HepG2 (cell line): ENCODE measurements at regions of chr11 and their contacts with region 1.

Region 1: DNA sequence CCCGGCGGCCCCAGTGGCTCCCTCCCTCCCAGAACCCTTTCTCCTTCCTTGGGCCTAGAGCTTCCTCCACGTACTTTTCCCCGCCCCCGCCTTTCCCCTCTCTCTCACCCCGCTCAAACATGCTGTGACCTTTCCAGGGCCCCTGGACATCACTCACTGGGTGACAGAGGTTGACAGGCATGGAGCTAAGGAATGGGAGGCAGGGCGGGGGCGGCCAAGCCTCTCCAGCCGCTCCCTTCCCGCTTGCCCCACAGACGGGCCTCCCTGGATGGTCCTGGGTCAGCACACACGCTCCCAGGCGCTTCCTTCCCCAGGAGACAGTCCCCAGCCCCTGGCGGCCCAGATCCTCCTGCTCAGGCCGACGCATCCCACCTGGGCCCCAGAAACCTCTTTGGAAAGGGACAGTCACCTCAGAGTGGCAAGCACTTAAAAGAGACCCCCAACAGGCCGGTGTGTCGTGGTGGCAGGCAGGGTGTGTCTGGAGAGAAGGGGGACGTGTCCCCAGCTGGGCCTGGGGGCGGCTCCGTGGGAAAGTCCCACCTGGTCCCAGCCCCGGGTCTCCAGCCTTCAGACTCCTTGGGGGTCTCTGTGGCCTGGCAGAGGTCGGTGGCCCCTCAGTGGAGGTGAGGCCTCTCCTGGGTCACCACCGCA is 8.8 kb downstream of the H19 start:
- DNase-seq: peak; percentile 78
- ATAC-seq: peak; percentile 71
- H3K4me3 ChIP-seq: peak overlapping the region in 2 of 3 experiments; percentile 49 to 50; a peak in 3 of 6 replicates
- H3K27ac ChIP-seq: peak overlapping the region; percentile 90
- H3K4me1 ChIP-seq: no peaks in the 10 kb centered on the region
- H3K27me3 ChIP-seq: no peaks in the 10 kb centered on the region
- CTCF ChIP-seq: no peak
- EP300 ChIP-seq: no peak
- POLR2A ChIP-seq: peak; percentile 54 to 60; a peak in 3 of 4 replicates
- RAD21 ChIP-seq: no peak

Region 2: GRCh38 chr11:1674173-1675131 is 314.3 kb before region 1 on chr11:
- CTCF ChIA-PET with region 1: no interaction called
- POLR2A ChIA-PET with region 1: interaction called, 12 read pairs
- in situ Hi-C with region 1: no loop called
- intact Hi-C with region 1: no loop called
- DNase-seq: no peak
- ATAC-seq: peak; percentile 71
- H3K4me3 ChIP-seq: peak overlapping the region in 1 of 3 experiments; percentile 38; a peak in 2 of 6 replicates
- H3K27ac ChIP-seq: peak overlapping the region; percentile 95
- H3K4me1 ChIP-seq: peaks cover 93% of the 10 kb centered on the region
- H3K27me3 ChIP-seq: no peaks in the 10 kb centered on the region
- CTCF ChIP-seq: no peak
- EP300 ChIP-seq: no peak
- POLR2A ChIP-seq: peak in 1 of 2 experiments; percentile 51; a peak in 2 of 4 replicates
- RAD21 ChIP-seq: no peak

Region 3: DNA sequence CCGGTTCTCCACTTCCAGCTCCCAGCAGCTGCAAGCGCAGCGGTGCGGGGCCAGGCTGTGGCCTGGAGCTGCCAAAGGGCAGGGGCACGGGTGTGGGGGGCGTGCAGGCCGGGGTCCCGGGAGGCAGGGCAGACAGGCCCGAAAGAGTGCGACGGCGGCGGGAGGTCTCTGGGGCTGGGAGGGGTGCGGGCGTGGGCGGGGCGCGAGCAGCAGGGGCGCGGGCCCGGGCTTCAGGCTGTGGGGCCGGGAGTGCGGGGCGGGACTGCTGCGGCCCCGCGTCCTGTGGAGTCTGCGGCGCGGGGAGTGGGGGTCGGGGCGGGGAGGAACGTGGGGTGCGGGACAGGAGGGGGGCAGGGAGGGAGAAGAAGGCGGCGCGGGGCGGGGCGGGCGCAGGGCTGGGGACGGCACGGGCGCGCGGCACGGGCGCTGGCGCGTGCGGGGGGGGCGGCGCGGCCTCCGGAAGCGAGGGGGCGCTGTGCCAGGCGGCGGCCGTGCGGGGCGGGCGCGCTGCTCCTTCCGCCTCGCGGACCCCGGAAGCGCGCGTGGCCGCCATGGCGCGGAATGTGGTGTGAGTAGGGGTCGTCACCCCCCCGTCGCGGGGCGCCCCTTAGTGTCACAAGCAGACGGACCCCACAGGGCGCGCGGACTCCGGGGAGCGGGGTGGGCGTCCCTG is 41.8 kb before region 1 on chr11 and contains the start of gene MRPL23:
- CTCF ChIA-PET with region 1: no interaction called
- POLR2A ChIA-PET with region 1: interaction called, 124 read pairs
- in situ Hi-C with region 1: no loop called
- intact Hi-C with region 1: no loop called
- DNase-seq: no peak
- ATAC-seq: peak; percentile 57
- H3K4me3 ChIP-seq: no peak within 1 kb of the TSS
- H3K27ac ChIP-seq: no peak within 1 kb of the TSS
- H3K4me1 ChIP-seq: peaks cover 7% of the 10 kb centered on the region; the same call in 1 of the 2 replicates
- H3K27me3 ChIP-seq: peaks cover 0 to 4% of the 10 kb centered on the region in 2 experiments; a peak in 2 of 5 replicates
- CTCF ChIP-seq: no peak
- EP300 ChIP-seq: no peak
- POLR2A ChIP-seq: no peak
- RAD21 ChIP-seq: no peak
- total RNA-seq, gene MRPL23: 123 and 126 TPM in 2 replicates

Region 4: GRCh38 chr11:1970956-1971355 is 17.8 kb before region 1 on chr11:
- CTCF ChIA-PET with region 1: no interaction called
- POLR2A ChIA-PET with region 1: interaction called, 720 read pairs
- in situ Hi-C with region 1: no loop called
- intact Hi-C with region 1: no loop called
- DNase-seq: no peak
- ATAC-seq: peak; percentile 14
- H3K4me3 ChIP-seq: no peak overlapping the region
- H3K27ac ChIP-seq: no peak overlapping the region
- H3K4me1 ChIP-seq: no peaks in the 10 kb centered on the region
- H3K27me3 ChIP-seq: no peaks in the 10 kb centered on the region
- CTCF ChIP-seq: no peak
- EP300 ChIP-seq: no peak
- POLR2A ChIP-seq: no peak
- RAD21 ChIP-seq: no peak

Region 5: DNA sequence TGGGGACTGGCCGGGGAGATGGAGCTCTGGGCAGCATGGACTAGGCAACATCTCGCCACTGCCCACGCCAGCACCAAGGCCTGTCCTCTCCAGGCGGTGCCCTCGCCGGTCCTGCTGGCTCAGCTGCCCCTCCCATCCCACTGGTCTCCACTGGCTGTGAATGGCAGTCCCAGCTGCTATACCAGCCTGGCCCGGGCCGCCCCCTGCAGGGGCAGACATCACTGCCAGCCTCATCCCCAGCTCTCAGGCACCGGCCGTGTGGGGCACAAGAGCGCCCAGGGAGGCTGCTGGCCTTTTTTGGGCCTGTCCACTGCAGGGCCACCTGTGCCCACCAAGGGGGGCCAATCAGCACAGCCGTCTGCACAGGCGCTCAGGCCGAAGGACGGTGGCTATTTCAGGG is 38.9 kb after region 1 on chr11:
- CTCF ChIA-PET with region 1: no interaction called
- POLR2A ChIA-PET with region 1: interaction called, 98 read pairs
- in situ Hi-C with region 1: no loop called
- intact Hi-C with region 1: no loop called
- DNase-seq: no peak
- ATAC-seq: no peak
- H3K4me3 ChIP-seq: no peak overlapping the region
- H3K27ac ChIP-seq: no peak overlapping the region
- H3K4me1 ChIP-seq: no peaks in the 10 kb centered on the region
- H3K27me3 ChIP-seq: no peaks in the 10 kb centered on the region
- CTCF ChIP-seq: no peak
- EP300 ChIP-seq: no peak
- POLR2A ChIP-seq: no peak
- RAD21 ChIP-seq: no peak

Region 6: DNA sequence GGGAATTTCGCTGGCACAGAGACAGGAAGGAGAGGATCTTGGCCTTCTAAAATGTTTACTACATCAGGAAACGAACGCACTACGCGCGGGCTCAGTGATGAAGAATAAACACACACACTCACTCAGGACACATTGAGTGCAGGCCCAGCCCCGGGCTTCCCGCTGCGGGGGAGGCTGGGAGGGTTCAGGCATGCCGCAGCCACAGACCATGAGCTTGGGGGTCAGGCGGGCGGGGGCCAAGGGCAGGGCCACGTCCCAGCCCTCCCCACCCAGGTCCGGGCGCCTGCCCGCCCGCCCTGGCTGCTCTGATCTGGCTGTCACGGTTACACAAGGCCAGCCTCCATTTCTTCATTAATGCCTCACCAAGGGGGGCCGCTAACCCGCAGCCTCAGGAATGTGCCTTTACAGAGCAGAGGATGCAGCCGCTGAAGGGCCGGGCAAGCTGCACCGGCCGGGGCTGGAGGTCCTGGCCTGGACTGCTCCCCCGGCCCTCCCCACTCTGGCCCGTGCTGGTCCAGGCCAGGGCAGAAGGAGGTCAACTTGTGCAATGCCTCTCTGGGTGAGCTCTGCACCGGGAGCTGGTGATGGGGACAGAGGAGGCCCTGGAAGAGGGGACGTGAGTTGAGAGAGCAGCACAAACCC is 108.7 kb after region 1 on chr11:
- CTCF ChIA-PET with region 1: no interaction called
- POLR2A ChIA-PET with region 1: interaction called, 43 read pairs
- in situ Hi-C with region 1: no loop called
- intact Hi-C with region 1: no loop called
- DNase-seq: peak; percentile 90
- ATAC-seq: peak; percentile 92
- H3K4me3 ChIP-seq: peak overlapping the region; percentile 46 to 70 (median 61)
- H3K27ac ChIP-seq: peak overlapping the region; percentile 80
- H3K4me1 ChIP-seq: peaks cover 67% of the 10 kb centered on the region
- H3K27me3 ChIP-seq: peaks cover under 1 to 1% of the 10 kb centered on the region in 2 experiments; a peak in 3 of 5 replicates
- CTCF ChIP-seq: peak; percentile 38
- EP300 ChIP-seq: peak in 1 of 2 experiments; percentile 49; a peak in 1 of 4 replicates
- POLR2A ChIP-seq: peak in 1 of 2 experiments; percentile 28; a peak in 1 of 4 replicates
- RAD21 ChIP-seq: peak; percentile 63

Region 7: DNA sequence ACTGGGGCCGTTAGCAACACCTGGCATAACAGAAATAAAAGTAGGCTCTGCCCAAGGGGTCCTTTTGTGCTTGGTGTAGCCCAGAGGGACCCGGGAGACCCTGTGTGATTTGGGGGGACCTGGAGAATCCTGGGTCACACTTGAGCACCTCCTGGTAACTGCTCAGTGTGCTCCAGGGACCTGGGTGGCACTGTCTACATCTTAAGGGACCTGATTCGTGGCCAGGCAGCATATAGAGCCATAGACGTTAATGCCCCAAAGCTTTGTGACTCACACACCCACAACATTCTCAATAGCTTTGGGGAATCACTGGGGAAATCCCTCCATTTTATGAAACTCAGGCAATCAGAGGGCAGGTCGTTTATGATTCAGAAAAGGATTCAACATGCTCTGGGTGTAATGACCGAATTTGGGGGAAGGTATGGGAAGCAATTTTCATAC is 154.0 kb after region 1 on chr11:
- CTCF ChIA-PET with region 1: no interaction called
- POLR2A ChIA-PET with region 1: interaction called, 108 read pairs
- in situ Hi-C with region 1: no loop called
- intact Hi-C with region 1: no loop called
- DNase-seq: no peak
- ATAC-seq: no peak
- H3K4me3 ChIP-seq: peak overlapping the region in 1 of 3 experiments; percentile 11; a peak in 1 of 6 replicates
- H3K27ac ChIP-seq: no peak overlapping the region
- H3K4me1 ChIP-seq: peaks cover 36% of the 10 kb centered on the region
- H3K27me3 ChIP-seq: peaks cover 8 to 65% of the 10 kb centered on the region in 2 experiments
- CTCF ChIP-seq: no peak
- EP300 ChIP-seq: no peak
- POLR2A ChIP-seq: no peak
- RAD21 ChIP-seq: no peak